Stomach (tissue), 19 donors: ENCODE measurements at regions of chr10 and their contacts with region 1.

Region 1: GRCh38 chr10:23994479-23995046 is 214.4 kb upstream of the KIAA1217 start:
- DNase-seq: peak; percentile 74 to 85
- H3K4me3 ChIP-seq: no peak overlapping the region
- H3K27ac ChIP-seq: no peak overlapping the region
- H3K4me1 ChIP-seq: no peaks in the 10 kb centered on the region
- H3K27me3 ChIP-seq: no peaks in the 10 kb centered on the region
- CTCF ChIP-seq: peak in 5 of 7 experiments; percentile 66 to 78 (median 74)
- EP300 ChIP-seq: no peak
- POLR2A ChIP-seq: no peak

Region 2: GRCh38 chr10:23702977-23703414 is 291.6 kb before region 1 on chr10:
- intact Hi-C with region 1: no loop called
- DNase-seq: peak; percentile 55 to 87
- H3K4me3 ChIP-seq: no peak overlapping the region
- H3K27ac ChIP-seq: no peak overlapping the region
- H3K4me1 ChIP-seq: peaks cover 0 to 8% (median 2%) of the 10 kb centered on the region in 4 donors
- H3K27me3 ChIP-seq: peaks cover 0 to 8% (median 0%) of the 10 kb centered on the region in 3 donors
- CTCF ChIP-seq: peak in 5 of 7 experiments; percentile 50 to 67 (median 58)
- EP300 ChIP-seq: no peak
- POLR2A ChIP-seq: no peak

Region 3: DNA sequence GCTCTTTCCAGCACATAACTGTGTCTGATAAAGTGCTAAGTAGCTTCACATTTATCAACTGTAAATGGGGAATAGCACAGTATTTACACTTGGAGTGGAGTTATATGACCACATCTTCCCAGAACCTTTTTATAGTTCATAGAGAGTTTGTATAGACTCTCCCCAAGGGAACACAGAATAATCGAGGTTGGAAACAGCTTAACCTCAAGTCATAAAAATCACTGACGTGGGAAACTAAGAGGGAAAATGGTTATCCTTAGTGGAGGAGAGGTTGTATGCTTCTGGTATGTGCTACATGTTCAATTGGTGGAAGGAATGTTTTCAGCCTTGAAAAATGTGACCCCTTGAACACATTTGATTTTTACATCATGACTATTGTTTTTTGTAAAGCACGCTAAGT is 46.5 kb after region 1 on chr10:
- intact Hi-C with region 1: no loop called
- DNase-seq: no peak
- H3K4me3 ChIP-seq: no peak overlapping the region
- H3K27ac ChIP-seq: no peak overlapping the region
- H3K4me1 ChIP-seq: peaks cover 0 to 14% (median 0%) of the 10 kb centered on the region in 4 donors
- H3K27me3 ChIP-seq: peaks cover 0 to 6% (median 0%) of the 10 kb centered on the region in 3 donors
- CTCF ChIP-seq: no peak
- EP300 ChIP-seq: no peak
- POLR2A ChIP-seq: no peak

Region 4: GRCh38 chr10:24197263-24197662 is 202.7 kb after region 1 on chr10:
- intact Hi-C with region 1: loop called (anchors 10 kb)
- DNase-seq: no peak
- H3K4me3 ChIP-seq: no peak overlapping the region
- H3K27ac ChIP-seq: no peak overlapping the region
- H3K4me1 ChIP-seq: peaks cover 0 to 4% (median 2%) of the 10 kb centered on the region in 4 donors
- H3K27me3 ChIP-seq: no peaks in the 10 kb centered on the region
- CTCF ChIP-seq: no peak
- EP300 ChIP-seq: no peak
- POLR2A ChIP-seq: no peak

Region 5: DNA sequence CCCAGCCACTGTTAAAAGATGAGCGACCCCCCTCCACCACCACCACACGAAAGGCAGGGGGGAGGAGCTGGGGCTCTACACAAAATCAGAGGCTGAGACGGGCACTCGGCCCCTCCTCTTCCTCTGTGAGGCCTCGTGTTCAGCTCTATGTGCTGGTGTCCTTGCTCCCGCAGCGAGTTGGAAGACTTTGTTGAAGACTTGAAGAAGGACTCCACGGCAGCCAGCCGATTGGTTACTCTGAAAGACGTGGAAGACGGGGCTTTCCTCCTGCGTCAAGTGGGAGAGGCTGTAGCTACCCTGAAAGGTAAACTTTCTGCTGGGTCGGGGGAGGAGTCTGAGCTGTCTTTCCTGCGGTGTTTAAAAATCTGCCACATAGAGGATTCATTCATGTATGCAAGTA is 525.4 kb after region 1 on chr10:
- intact Hi-C with region 1: loop called (anchors 10 kb)
- DNase-seq: peak in 1 of 2 donors; percentile 70
- H3K4me3 ChIP-seq: no peak overlapping the region
- H3K27ac ChIP-seq: no peak overlapping the region
- H3K4me1 ChIP-seq: peaks cover 0 to 16% (median 5%) of the 10 kb centered on the region in 4 donors
- H3K27me3 ChIP-seq: no peaks in the 10 kb centered on the region
- CTCF ChIP-seq: no peak
- EP300 ChIP-seq: no peak
- POLR2A ChIP-seq: no peak